Ascending aorta (tissue), 2 donors: ENCODE measurements at regions of chr2 and their contacts with region 1.

Region 1: GRCh38 chr2:41414486-41415230 is 633.2 kb upstream of the PKDCC start:
- DNase-seq: no peak
- H3K4me3 ChIP-seq: no peak overlapping the region
- H3K27ac ChIP-seq: no peak overlapping the region
- H3K4me1 ChIP-seq: no peaks in the 10 kb centered on the region
- H3K27me3 ChIP-seq: no peaks in the 10 kb centered on the region
- CTCF ChIP-seq: peak in 2 of 3 experiments; percentile 31 to 54

Region 2: DNA sequence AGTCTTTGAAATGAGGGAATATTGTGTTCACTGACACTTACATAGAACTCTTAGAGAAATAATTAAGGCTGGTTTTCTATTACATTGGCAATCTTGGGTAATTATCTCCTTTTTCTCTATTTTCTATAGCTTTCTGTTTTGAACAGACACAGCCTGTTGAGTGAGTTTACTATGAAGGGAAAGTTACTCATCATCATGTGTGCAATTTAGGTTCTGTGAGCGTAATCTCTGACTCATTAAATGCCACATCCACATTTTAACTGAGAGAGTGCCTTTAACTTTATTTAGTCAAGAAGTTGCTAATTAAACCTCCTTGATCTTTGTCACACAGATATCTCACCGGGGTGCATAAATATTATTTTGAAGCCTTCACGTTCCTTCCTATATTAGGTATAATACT is 788.8 kb before region 1 on chr2:
- intact Hi-C with region 1: no loop called
- DNase-seq: no peak
- H3K4me3 ChIP-seq: no peak overlapping the region
- H3K27ac ChIP-seq: no peak overlapping the region
- H3K4me1 ChIP-seq: no peaks in the 10 kb centered on the region
- H3K27me3 ChIP-seq: no peaks in the 10 kb centered on the region
- CTCF ChIP-seq: no peak

Region 3: GRCh38 chr2:41698678-41699422 is 284.2 kb after region 1 on chr2:
- intact Hi-C with region 1: loop called (anchors 2 kb)
- DNase-seq: no peak
- H3K4me3 ChIP-seq: peak overlapping the region; percentile 44 to 46
- H3K27ac ChIP-seq: no peak overlapping the region
- H3K4me1 ChIP-seq: no peaks in the 10 kb centered on the region
- H3K27me3 ChIP-seq: no peaks in the 10 kb centered on the region
- CTCF ChIP-seq: peak; percentile 70 to 94 (median 86)